Prostate gland (tissue), 2 donors: ENCODE measurements at regions of chr11 and their contacts with region 1.

Region 1: GRCh38 chr11:59550368-59550841 is 39.1 kb downstream of the OR4D9 start:
- DNase-seq: peak; percentile 72
- H3K4me3 ChIP-seq: peak overlapping the region; percentile 34 to 41
- H3K27ac ChIP-seq: peak overlapping the region; percentile 67 to 74
- H3K4me1 ChIP-seq: no peaks in the 10 kb centered on the region
- H3K27me3 ChIP-seq: no peaks in the 10 kb centered on the region
- CTCF ChIP-seq: peak in 2 of 4 experiments; percentile 50 to 62
- POLR2A ChIP-seq: no peak

Region 2: DNA sequence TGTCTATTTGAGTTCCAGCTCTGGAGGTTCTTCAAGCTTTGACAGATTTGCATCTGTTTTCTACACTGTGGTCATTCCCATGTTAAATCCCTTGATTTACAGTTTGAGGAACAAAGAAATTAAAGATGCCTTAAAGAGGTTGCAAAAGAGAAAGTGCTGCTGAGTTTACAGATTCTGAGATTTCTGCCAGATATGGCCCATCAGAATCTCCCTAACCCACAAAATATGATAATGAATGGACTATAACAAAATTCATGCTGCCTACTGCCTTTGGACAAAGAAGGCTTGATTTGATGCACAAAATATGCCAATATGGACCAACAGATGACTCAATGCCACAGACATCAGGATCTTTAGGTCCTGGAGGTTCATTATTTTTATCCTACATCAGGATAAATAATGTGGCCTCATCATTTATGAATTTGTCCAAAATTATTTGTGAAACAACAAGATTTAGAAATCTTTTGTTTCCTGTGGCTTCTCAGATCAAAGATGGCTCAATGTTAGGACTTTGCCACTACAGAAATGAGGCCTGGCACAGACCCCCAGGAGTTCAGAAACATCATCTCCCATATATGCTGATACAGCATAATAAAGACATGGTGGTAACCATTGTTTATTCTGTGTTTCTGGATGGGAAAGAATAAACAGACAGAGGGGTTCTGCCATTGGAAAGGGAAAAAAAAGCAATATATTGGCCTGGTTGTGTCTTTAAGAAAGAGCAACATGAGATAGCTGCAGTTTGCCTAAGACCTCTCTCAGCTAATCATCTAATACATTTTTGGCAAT is 185.0 kb before region 1 on chr11:
- intact Hi-C with region 1: no loop called
- DNase-seq: no peak
- H3K4me3 ChIP-seq: no peak overlapping the region
- H3K27ac ChIP-seq: no peak overlapping the region
- H3K4me1 ChIP-seq: no peaks in the 10 kb centered on the region
- H3K27me3 ChIP-seq: no peaks in the 10 kb centered on the region
- CTCF ChIP-seq: no peak
- POLR2A ChIP-seq: no peak

Region 3: DNA sequence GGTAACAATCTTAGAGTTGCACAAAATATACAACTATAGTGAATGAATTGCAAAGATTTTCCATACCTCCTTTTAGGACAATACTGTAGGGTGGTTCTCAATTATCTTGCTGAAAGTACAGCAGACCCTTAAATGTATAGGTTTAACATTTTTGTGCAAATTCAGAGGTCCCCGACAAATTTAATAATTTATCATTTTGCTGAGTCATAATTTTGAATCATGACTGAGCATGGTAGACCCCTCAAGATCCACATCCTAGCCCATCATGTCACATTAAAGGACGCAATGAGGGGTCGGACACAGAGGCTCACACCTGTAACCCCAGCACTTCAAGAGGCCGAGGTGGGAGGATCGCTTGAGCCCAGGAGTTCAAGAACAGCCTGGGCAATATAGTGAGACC is 21.7 kb after region 1 on chr11:
- intact Hi-C with region 1: no loop called
- DNase-seq: no peak
- H3K4me3 ChIP-seq: no peak overlapping the region
- H3K27ac ChIP-seq: no peak overlapping the region
- H3K4me1 ChIP-seq: no peaks in the 10 kb centered on the region
- H3K27me3 ChIP-seq: no peaks in the 10 kb centered on the region
- CTCF ChIP-seq: no peak
- POLR2A ChIP-seq: no peak

Region 4: DNA sequence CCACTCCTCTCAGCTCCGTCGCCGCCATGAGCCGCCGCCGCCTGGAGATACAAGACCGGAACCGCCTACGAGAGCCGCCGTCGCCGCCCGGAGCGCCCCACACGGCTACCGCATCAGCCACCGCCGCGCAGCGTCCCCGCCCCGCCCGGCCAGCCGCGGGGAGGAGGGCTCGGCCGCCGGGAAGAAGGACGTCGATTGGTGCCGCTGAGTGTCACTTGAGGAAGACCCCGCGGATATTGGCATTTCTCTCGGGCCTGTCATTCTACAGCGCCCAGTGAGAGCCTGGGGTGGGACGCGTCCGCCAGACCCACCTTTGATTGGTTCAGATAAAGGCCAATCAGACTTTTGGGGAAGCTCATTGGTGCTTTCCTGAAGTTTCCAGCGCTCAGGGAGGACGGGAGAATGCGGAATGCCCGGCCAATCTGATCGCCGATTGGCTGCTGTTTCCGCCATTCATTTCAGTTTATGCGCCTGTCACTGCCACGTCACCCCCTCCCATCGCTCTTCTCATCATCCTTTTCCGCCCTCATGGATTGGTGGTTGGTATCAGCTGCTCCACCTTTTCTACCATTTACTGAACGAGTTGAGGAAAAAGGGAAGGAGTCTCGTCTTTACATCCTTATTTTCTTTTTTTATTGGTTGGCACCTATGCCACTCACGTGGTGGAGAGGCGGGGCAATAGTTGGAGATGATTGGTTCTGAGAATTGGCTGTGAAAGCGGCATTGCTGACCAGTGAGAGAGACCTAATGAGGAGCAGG is 65.4 kb after region 1 on chr11 and contains the start of gene OSBP:
- intact Hi-C with region 1: loop called (anchors 1 kb)
- DNase-seq: peak; percentile 100
- H3K4me3 ChIP-seq: peak within 1 kb of the TSS; percentile 60 to 84
- H3K27ac ChIP-seq: peak within 1 kb of the TSS; percentile 91 to 95
- H3K4me1 ChIP-seq: peaks cover 8% of the 10 kb centered on the region
- H3K27me3 ChIP-seq: no peaks in the 10 kb centered on the region
- CTCF ChIP-seq: no peak
- POLR2A ChIP-seq: peak; percentile 75
- total RNA-seq, gene OSBP: 46.1 to 49.0 TPM

Region 5: DNA sequence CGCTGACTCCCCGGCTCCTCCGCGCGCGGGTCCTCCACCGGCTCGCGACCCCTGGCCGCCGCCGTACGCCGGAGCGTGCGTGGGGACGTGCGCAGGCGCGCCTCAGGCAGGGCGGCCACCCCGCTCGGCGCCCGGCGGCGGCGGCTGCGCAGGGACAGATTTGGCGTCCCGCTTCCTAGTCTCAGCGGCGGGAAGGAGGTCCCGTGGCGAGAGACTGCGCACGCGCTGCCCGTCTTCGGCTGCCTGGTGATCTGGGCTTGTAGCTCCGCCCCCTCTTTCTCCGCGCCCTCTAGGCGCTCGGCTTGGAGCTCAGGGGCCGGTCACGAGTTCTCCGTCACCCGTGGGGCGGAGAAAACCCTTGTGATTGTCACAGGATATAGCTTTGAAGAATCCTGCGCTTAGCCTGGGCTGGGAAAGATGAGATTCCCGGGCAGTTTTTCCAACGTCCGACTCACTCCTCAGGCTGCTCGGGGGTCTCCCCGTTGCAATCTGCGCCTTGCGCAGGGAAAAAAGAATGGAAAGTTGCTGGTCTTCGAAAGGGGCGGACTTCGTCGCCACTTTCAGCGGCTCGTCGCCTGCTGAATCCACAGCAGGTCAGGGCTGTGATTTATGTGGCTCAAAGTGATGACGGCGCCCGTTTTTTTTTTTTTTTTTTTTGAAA is 118.7 kb after region 1 on chr11 and contains the start of gene PATL1:
- intact Hi-C with region 1: loop called (anchors 5 kb)
- DNase-seq: peak; percentile 99
- H3K4me3 ChIP-seq: peak within 1 kb of the TSS; percentile 68 to 83
- H3K27ac ChIP-seq: peak within 1 kb of the TSS; percentile 92 to 97
- H3K4me1 ChIP-seq: peaks cover 8% of the 10 kb centered on the region
- H3K27me3 ChIP-seq: no peaks in the 10 kb centered on the region
- CTCF ChIP-seq: peak in 1 of 4 experiments; percentile 3
- POLR2A ChIP-seq: peak; percentile 95
- total RNA-seq, gene PATL1: 10.3 to 26.2 TPM

Region 6: GRCh38 chr11:59967677-59968394 is 417.4 kb after region 1 on chr11:
- intact Hi-C with region 1: no loop called
- DNase-seq: no peak
- H3K4me3 ChIP-seq: no peak overlapping the region
- H3K27ac ChIP-seq: no peak overlapping the region
- H3K4me1 ChIP-seq: no peaks in the 10 kb centered on the region
- H3K27me3 ChIP-seq: no peaks in the 10 kb centered on the region
- CTCF ChIP-seq: no peak
- POLR2A ChIP-seq: no peak

Region 7: DNA sequence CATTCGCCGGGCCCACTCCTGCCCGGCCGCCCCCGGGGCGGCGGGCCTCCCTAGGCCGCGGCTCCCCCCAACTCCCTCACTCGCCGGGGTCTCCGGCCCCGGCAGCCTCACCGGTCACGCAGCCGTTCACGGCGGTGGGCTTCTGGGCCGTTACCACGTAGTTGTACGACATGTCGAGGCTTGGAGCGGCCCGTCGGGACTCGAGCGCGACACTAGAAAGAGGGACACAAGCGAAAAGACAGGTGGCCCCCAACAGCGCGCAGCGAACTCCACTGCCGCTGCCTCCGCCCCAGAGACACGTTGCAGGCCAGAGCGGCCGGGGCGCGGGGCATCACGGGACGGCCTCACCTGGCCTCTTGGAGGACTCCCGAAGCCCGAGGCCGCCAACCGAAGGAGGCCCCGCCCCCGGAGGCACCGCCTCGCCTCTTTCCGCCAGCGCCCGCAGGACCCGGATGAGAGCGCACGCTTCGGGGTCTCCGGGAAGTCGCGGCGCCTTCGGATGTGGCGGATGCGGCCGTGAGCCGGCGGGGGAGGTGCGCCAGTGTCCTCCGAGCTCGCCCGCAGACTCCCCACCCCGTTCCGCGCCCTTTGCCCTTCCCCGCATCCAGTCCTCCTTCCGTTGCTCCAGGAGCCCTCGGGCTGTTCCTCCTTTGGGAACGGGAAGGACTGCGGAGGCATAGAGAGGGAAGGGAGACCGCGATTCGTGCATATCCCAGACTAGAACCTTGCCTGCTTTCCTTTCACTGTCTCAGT is 1782.6 kb after region 1 on chr11 and contains the starts of genes DDB1 and TKFC:
- intact Hi-C with region 1: loop called (anchors 10 kb)
- DNase-seq: peak; percentile 95
- H3K4me3 ChIP-seq: peak within 1 kb of the TSS; percentile 93 to 95
- H3K27ac ChIP-seq: peak within 1 kb of the TSS; percentile 82 to 84
- H3K4me1 ChIP-seq: no peaks in the 10 kb centered on the region
- H3K27me3 ChIP-seq: no peaks in the 10 kb centered on the region
- CTCF ChIP-seq: peak in 2 of 4 experiments; percentile 10 to 16
- POLR2A ChIP-seq: peak; percentile 83
- total RNA-seq, gene DDB1: 179 to 253 TPM
- total RNA-seq, gene TKFC: 52.8 to 79.3 TPM